HEK293 (cell line): ENCODE measurements at regions of chr17 and their contacts with region 1.

Region 1: GRCh38 chr17:2401426-2402221 is 764 bp upstream of the MNT start:
- H3K4me3 ChIP-seq: peak overlapping the region; percentile 43
- H3K27ac ChIP-seq: peak overlapping the region; percentile 77
- H3K4me1 ChIP-seq: peaks cover 19% of the 10 kb centered on the region
- CTCF ChIP-seq: no peak

Region 2: DNA sequence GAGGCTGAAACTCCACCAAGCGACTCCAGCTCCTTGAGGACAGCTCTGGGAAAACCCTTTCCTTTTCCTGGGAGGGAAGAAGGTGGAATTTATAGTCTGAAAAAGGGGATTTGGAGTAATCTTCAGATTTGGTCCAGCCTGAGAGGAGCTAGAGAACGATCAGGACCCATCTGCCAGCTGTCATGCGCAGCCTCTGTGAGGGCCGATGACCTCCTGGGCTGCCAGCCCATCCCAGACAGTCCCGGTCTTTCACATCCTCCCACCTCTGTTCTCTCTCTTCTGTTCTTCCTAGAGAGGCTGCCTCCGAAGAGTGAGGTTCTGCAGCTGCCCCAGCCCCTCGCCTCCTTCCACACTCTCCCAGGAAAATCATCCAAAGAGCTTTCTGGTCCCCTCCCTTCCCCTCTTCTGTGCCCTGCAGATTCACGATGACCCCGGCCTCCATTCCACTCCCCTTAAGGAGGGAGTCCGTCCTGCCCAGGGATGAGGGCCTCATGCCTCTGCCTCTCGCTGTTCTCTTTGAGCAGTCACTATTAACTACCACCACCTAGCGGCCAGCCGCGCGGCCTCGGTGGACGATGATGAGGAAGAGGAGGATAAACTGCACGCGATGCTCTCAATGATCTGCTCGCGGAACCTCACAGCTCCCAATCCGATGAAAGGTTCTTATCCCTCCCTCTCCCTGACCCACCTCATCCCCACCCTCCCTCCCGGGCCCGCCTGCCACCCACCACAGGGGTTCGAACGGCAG is 34.7 kb before region 1 on chr17:
- CTCF ChIA-PET with region 1: no interaction called
- POLR2A ChIA-PET with region 1: no interaction called
- H3K4me3 ChIP-seq: no peak overlapping the region
- H3K27ac ChIP-seq: no peak overlapping the region
- H3K4me1 ChIP-seq: no peaks in the 10 kb centered on the region; the same call in 1 of the 2 replicates
- CTCF ChIP-seq: no peak

Region 3: DNA sequence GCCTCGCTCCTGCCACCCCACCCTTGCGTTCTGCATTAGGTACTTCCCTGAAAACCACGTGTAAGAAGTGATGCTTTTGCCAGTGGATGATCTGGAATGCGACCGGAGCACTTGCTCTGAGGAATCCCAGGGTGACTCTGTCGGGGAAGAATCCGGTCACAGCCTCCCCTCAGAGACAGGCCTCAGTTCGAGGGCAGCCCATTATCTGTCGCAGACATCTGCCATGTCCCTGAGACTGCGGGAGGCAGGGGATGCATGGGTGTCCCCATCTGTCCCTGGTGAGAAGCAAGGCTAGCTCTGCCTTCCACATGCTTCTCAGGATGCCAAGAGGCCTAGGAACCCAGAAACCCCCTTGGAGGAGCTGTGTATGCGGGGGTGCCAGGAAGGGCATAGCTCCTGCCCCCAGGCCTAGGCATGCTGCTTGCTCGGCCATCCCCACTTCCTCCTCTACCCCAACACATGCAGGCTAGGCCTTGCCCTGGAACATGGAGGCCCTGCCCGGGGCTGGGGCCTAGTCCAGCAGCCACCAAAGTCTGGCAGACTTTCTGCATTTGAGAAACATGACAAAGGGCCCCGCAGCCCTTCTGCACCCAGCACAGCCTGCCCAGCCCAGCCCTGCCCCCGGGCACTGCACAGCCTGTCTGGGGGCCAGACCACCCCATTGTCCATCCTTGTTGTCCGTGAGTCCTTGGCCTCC is 21.2 kb before region 1 on chr17:
- CTCF ChIA-PET with region 1: interaction called, 116 read pairs
- POLR2A ChIA-PET with region 1: interaction called, 9 read pairs
- H3K4me3 ChIP-seq: no peak overlapping the region
- H3K27ac ChIP-seq: no peak overlapping the region
- H3K4me1 ChIP-seq: peaks cover 14% of the 10 kb centered on the region
- CTCF ChIP-seq: no peak

Region 4: GRCh38 chr17:2613089-2613808 is 211.6 kb after region 1 on chr17:
- CTCF ChIA-PET with region 1: no interaction called
- POLR2A ChIA-PET with region 1: no interaction called
- H3K4me3 ChIP-seq: no peak overlapping the region
- H3K27ac ChIP-seq: no peak overlapping the region
- H3K4me1 ChIP-seq: peaks cover 20% of the 10 kb centered on the region
- CTCF ChIP-seq: no peak